Dorsolateral prefrontal cortex (tissue), 120 donors: ENCODE measurements at regions of chrX and their contacts with region 1.

Region 1: GRCh38 chrX:48539345-48540027 is at the start of gene TBC1D25:
- DNase-seq: peak; percentile 85 to 97 (median 94)
- H3K4me3 ChIP-seq: peak within 1 kb of the TSS; percentile 34 to 84 (median 69)
- H3K27ac ChIP-seq: peak within 1 kb of the TSS in 58 of 59 donors; percentile 65 to 96 (median 88)
- H3K27me3 ChIP-seq: peaks cover 0 to 26% (median 0%) of the 10 kb centered on the region in 45 donors
- CTCF ChIP-seq: peak in 50 of 56 donors; percentile 13 to 68 (median 50)
- total RNA-seq, gene TBC1D25: 15.0 to 35.0 (median 22.4) TPM

Region 2: DNA sequence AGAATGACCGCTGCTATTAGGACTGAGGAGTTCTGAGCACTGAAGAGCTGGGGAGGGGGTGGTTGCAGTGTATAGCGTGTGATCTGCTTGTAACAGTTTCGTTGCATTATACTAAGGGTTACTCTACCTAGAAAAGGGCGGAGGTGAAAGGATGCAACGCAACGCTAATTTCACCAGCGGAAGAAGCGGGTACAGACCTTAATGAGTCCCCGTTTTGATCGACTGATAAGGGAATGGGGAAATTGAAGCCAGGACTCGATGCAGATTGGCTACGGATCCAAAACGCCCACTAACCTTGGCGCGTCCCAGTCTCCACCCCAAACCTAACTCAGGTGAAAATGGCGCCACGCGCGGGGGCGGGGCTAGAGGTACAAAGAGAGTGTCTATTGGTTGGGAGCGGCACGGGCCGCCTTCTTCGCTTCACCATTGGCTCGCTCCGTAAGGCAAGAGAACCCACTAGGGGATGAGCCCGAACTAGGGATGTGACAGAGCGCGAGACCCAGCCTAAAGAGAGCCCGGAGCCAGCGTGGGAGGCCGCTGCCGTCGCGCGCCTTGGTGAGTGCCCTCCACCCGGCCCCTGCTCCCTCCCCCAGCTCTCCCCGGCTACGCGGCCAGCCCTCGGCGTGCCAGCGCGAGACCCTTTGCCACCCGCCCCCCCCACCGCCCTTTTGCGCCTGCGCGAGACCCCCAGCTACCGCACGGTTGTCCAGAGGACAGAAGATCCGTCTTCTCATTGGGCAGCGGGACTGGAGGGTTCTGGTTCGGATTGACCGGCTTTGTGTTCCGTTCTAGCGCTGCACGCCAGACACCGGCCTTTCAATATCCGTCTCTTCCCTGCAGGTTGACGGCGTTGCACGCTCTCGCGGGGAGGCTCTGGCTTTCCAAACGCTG is 17.9 kb before region 1 on chrX and contains the start of gene EBP:
- intact Hi-C with region 1: loop called in 1 of 2 experiments (anchors 2 kb)
- DNase-seq: peak; percentile 76 to 94 (median 88)
- H3K4me3 ChIP-seq: peak within 1 kb of the TSS; percentile 30 to 73 (median 60)
- H3K27ac ChIP-seq: peak within 1 kb of the TSS in 48 of 59 donors; percentile 18 to 86 (median 63)
- H3K27me3 ChIP-seq: peaks cover 0 to 28% (median 4%) of the 10 kb centered on the region in 45 donors
- CTCF ChIP-seq: peak in 3 of 56 donors; percentile 3 to 12 (median 6)
- total RNA-seq, gene EBP: 13.5 to 43.9 (median 25.0) TPM

Region 3: DNA sequence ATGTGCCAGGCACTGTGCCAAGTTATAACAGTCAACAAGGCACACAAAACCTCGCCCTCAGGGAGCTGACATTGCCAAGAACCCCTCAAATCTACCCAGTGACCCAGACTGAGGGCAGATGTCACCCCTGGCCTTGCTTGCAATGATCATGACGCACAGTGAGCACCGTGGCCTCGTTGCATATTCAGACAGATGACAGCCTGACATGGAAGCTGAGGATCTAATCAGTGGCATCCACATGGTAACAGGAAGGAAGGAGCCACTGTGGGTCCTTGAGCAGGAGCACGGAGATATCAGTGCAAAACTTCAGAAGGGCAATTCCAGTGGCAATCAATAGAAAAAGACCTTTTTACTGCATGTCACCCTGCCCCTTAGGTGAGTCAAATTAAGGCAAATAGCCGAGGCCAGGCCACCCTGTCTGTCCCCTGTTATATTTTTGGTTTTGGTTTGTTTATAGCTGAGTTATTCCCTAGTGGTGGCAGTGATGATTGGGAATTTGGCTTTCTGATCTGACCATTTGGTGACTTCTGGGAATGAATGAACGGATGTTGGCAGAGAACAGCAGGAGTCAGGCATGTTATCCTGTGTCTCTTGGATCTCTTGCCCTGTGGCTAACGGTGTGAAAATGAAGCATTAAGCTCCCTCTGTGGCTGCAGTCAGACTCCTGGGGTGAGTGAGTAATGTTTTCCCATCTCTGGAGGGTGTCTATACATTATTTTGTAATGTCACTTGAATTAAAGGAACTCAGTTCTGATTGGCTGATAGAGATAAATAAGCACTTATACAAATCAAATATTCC is 78.3 kb after region 1 on chrX:
- intact Hi-C with region 1: no loop called
- DNase-seq: peak in 1 of 10 donors; percentile 5
- H3K4me3 ChIP-seq: no peak overlapping the region
- H3K27ac ChIP-seq: no peak overlapping the region
- H3K27me3 ChIP-seq: peaks cover 0 to 40% (median 6%) of the 10 kb centered on the region in 45 donors
- CTCF ChIP-seq: no peak